CD4-positive, alpha-beta T cell (primary cell): ENCODE measurements at regions of chr12 and their contacts with region 1.

Region 1: GRCh38 chr12:110048242-110049027 is at the start of gene C12orf76:
- DNase-seq: peak; percentile 82 to 97 (median 90)
- ATAC-seq: peak; percentile 99
- H3K4me3 ChIP-seq: peak within 1 kb of the TSS; percentile 79
- H3K4me3 Mint-ChIP-seq: peak within 1 kb of the TSS; percentile 93
- H3K27ac ChIP-seq: peak within 1 kb of the TSS; percentile 76 to 87
- H3K27ac Mint-ChIP-seq: peak within 1 kb of the TSS; percentile 82
- H3K4me1 ChIP-seq: peaks cover 29% of the 10 kb centered on the region
- H3K4me1 Mint-ChIP-seq: peaks cover 29% of the 10 kb centered on the region
- H3K27me3 ChIP-seq: no peaks in the 10 kb centered on the region
- H3K27me3 Mint-ChIP-seq: no peaks in the 10 kb centered on the region
- CTCF ChIP-seq: no peak
- total RNA-seq, gene C12orf76: 9.8 to 12.6 TPM

Region 2: DNA sequence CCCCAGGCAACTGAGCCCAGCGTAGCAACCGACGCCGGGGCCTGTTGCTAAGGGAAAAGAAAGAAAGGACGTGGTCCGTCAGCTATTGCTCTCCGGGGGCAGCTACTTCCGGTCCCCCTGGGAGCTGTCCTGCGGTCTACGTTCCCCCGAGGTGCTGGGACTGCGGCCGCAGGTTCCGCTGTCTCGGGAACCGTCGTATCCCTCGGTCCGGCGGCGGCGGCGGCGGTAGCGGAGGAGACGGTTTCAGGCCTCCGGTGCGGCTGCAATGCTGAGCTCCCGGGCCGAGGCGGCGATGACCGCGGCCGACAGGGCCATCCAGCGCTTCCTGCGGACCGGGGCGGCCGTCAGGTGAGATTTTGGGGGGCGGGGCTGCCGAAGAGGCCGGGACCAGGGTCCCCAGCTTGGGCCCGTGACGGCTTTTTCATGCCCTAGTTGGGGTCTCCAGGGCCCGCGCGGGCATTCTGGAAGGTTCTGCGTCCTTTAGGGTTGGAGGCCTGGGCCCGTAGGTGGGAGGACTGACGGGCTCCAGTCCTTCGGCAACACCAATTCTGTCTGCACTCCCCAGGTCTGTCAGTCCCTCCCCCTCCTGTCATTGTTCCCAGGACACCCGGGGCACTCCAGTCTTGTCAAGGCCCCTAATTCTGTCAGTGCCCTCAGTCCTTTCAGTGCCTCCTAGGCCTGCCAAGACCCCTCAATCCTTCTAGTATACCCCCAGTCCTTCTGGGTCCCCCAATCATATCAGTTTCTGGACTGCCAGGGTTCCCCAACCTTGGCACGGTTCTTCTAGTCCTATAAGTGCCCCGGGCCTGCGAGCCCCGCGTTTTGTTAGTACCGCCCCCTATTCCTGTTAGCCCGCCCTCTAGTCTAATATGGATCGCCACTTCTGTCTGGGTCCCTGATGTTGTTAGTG is 995.8 kb before region 1 on chr12 and contains the start of gene USP30:
- CTCF ChIA-PET with region 1: no interaction called
- POLR2A ChIA-PET with region 1: no interaction called
- intact Hi-C with region 1: loop called in 1 of 2 experiments (anchors 5 kb)
- DNase-seq: peak; percentile 75 to 93 (median 81)
- ATAC-seq: peak; percentile 77
- H3K4me3 ChIP-seq: peak within 1 kb of the TSS; percentile 92
- H3K4me3 Mint-ChIP-seq: peak within 1 kb of the TSS; percentile 98
- H3K27ac ChIP-seq: peak within 1 kb of the TSS; percentile 87
- H3K27ac Mint-ChIP-seq: peak within 1 kb of the TSS; percentile 86
- H3K4me1 ChIP-seq: peaks cover 23% of the 10 kb centered on the region
- H3K4me1 Mint-ChIP-seq: peaks cover 13% of the 10 kb centered on the region
- H3K27me3 ChIP-seq: no peaks in the 10 kb centered on the region
- H3K27me3 Mint-ChIP-seq: no peaks in the 10 kb centered on the region
- CTCF ChIP-seq: no peak
- total RNA-seq, gene USP30: 21.8 to 23.0 TPM

Region 3: GRCh38 chr12:110079477-110080400 is 31.3 kb after region 1 on chr12:
- CTCF ChIA-PET with region 1: no interaction called
- POLR2A ChIA-PET with region 1: interaction called, 6 read pairs
- intact Hi-C with region 1: loop called in 1 of 2 experiments (anchors 2 kb)
- DNase-seq: peak; percentile 50 to 89 (median 67)
- ATAC-seq: peak; percentile 94
- H3K4me3 ChIP-seq: peak overlapping the region; percentile 41
- H3K4me3 Mint-ChIP-seq: peak overlapping the region; percentile 84
- H3K27ac ChIP-seq: peak overlapping the region; percentile 75 to 84
- H3K27ac Mint-ChIP-seq: peak overlapping the region; percentile 95
- H3K4me1 ChIP-seq: peaks cover 24% of the 10 kb centered on the region
- H3K4me1 Mint-ChIP-seq: peaks cover 18% of the 10 kb centered on the region
- H3K27me3 ChIP-seq: no peaks in the 10 kb centered on the region
- H3K27me3 Mint-ChIP-seq: no peaks in the 10 kb centered on the region
- CTCF ChIP-seq: no peak